Vagina (tissue), 2 donors: ENCODE measurements at regions of chr1 and their contacts with region 1.

Region 1: GRCh38 chr1:202571347-202572339 is 138.6 kb downstream of the SYT2 start:
- DNase-seq: peak in 1 of 2 donors; percentile 34
- H3K4me3 ChIP-seq: no peak overlapping the region
- H3K27ac ChIP-seq: peak overlapping the region; percentile 4
- H3K4me1 ChIP-seq: peaks cover 46% of the 10 kb centered on the region
- H3K27me3 ChIP-seq: no peaks in the 10 kb centered on the region
- CTCF ChIP-seq: peak in 1 of 3 experiments; percentile 5
- POLR2A ChIP-seq: no peak

Region 2: DNA sequence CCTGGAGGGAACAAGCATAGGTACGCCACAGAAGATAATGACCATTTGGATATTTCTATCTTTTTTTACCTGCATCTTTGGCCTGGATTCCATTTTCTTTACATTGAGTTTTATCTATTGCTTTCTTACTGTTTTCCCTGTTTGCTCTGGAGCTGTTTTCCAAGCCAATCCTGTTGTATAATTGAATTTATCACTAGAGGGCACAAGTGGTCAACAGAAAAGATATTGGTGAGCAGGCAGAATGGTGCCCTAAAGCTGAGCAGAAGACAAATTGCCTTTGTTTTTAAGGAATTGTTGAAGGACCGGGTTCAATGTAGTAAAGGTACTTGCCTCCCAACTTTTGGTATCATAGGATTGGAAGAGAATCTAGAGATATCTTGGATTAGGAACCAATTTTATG is 70.4 kb before region 1 on chr1:
- intact Hi-C with region 1: loop called (anchors 10 kb)
- DNase-seq: no peak
- H3K4me3 ChIP-seq: no peak overlapping the region
- H3K27ac ChIP-seq: no peak overlapping the region
- H3K4me1 ChIP-seq: peaks cover 14% of the 10 kb centered on the region
- H3K27me3 ChIP-seq: no peaks in the 10 kb centered on the region
- CTCF ChIP-seq: peak; percentile 23 to 53 (median 37)
- POLR2A ChIP-seq: no peak

Region 3: GRCh38 chr1:203172128-203173010 is 600.7 kb after region 1 on chr1:
- intact Hi-C with region 1: no loop called
- DNase-seq: no peak
- H3K4me3 ChIP-seq: no peak overlapping the region
- H3K27ac ChIP-seq: no peak overlapping the region
- H3K4me1 ChIP-seq: peaks cover 16% of the 10 kb centered on the region
- H3K27me3 ChIP-seq: no peaks in the 10 kb centered on the region
- CTCF ChIP-seq: peak in 2 of 3 experiments; percentile 38 to 43
- POLR2A ChIP-seq: no peak